ENCODE measurements at regions of chr12 and their contacts with region 1.

Region 1: DNA sequence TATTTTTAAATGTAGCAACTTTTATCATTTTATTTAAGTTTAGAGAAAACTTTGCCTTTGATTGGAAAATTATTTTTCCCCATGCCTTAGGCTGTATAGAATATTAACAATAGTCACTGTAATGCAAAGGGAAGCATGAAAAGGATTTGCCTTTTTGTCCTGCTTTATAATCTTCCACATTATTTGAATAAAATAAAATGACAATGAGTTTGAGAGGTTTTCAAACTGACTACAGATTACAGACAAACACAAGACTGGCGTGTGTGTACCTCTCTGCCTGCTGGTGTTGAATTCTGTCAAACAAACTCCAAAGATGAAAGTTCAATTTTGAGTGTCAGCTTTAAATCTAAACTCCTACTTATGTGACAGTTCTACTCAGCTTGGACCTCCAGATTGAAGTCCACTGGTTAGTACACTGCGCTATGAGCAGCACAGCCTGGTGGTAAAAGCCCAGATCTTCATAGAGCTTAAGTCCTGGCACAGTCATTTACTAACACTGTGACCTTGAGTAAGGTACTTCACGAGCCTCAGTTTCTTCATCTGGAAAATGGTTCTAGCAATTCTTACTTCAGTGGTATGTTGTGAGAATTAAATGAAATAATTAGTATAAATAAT is 98.3 kb upstream of the CPNE8 start:
- DNase-seq: no peak
- ATAC-seq: no peak
- H3K4me3 ChIP-seq: no peak overlapping the region
- H3K27ac ChIP-seq: no peak overlapping the region
- H3K4me1 ChIP-seq: no peaks in the 10 kb centered on the region
- H3K27me3 ChIP-seq: no peaks in the 10 kb centered on the region
- CTCF ChIP-seq: no peak
- POLR2A ChIP-seq: no peak
- RAD21 ChIP-seq: no peak

Region 2: GRCh38 chr12:38728894-38729293 is 274.8 kb before region 1 on chr12:
- CTCF ChIA-PET with region 1: no interaction called
- POLR2A ChIA-PET with region 1: no interaction called
- dilution Hi-C with region 1: no loop called
- in situ Hi-C with region 1: no loop called
- intact Hi-C with region 1: no loop called
- DNase-seq: no peak
- ATAC-seq: no peak
- H3K4me3 ChIP-seq: no peak overlapping the region
- H3K27ac ChIP-seq: no peak overlapping the region
- H3K4me1 ChIP-seq: no peaks in the 10 kb centered on the region
- H3K27me3 ChIP-seq: no peaks in the 10 kb centered on the region
- CTCF ChIP-seq: no peak
- POLR2A ChIP-seq: no peak
- RAD21 ChIP-seq: no peak

Region 3: GRCh38 chr12:38746744-38747143 is 256.9 kb before region 1 on chr12:
- CTCF ChIA-PET with region 1: no interaction called
- POLR2A ChIA-PET with region 1: no interaction called
- dilution Hi-C with region 1: no loop called
- in situ Hi-C with region 1: no loop called
- intact Hi-C with region 1: no loop called
- DNase-seq: no peak
- ATAC-seq: no peak
- H3K4me3 ChIP-seq: no peak overlapping the region
- H3K27ac ChIP-seq: no peak overlapping the region
- H3K4me1 ChIP-seq: no peaks in the 10 kb centered on the region
- H3K27me3 ChIP-seq: no peaks in the 10 kb centered on the region
- CTCF ChIP-seq: no peak
- POLR2A ChIP-seq: no peak
- RAD21 ChIP-seq: no peak

Region 4: DNA sequence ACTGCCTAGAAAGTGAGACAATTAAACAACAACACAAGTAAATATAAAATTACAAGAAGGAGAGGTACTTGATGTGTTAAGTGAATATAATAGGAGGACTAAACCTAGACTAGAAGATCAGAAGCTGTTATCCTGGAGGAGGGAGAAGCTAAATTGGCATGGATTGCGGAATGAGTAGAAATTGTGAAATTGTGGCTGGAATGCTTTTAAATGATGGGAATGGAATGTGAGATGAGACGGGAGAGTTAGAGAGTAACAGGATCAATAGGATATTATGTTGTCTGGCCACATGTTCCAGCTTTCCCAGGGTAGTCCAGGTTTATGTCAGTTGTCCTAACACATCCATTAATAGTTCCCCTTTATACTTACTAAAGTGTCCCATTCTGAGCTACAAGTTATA is 54.3 kb before region 1 on chr12:
- CTCF ChIA-PET with region 1: no interaction called
- POLR2A ChIA-PET with region 1: no interaction called
- dilution Hi-C with region 1: no loop called
- in situ Hi-C with region 1: no loop called
- intact Hi-C with region 1: loop called (anchors 10 kb)
- DNase-seq: no peak
- ATAC-seq: no peak
- H3K4me3 ChIP-seq: no peak overlapping the region
- H3K27ac ChIP-seq: no peak overlapping the region
- H3K4me1 ChIP-seq: no peaks in the 10 kb centered on the region
- H3K27me3 ChIP-seq: no peaks in the 10 kb centered on the region
- CTCF ChIP-seq: no peak
- POLR2A ChIP-seq: no peak
- RAD21 ChIP-seq: no peak

Region 5: DNA sequence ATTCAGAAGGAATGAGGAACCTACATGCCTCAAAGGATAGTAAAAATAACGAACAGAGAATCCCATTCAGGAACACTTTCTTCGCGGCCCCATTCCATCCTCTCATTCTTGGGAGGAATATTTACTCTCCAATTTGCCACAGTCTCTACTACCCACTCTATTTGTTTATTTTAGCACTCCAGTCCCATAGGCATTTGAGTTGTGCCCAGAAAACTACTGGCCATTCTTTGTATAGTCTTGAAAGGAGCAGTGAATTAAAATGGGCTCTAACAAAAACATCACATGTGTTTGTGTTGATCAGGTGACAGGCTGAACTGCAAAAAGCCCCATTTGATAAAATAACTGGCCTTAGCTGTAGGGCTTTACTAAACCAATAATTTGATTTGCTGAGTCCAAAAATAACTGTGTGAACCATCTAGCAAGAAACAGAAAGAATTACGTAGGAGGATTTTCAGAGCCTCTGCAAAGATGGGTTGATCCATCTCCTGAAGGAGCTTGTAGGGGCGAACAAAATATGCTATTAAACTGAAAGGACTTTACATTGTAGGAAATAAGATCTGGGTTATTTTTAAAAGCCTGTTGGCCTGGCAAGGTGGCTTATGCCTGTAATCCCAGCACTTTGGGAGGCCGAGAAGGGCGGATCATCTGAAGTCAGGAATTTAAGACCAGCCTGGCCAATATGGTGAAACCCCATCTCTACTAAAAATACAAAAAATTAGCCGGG is 44.1 kb after region 1 on chr12:
- CTCF ChIA-PET with region 1: no interaction called
- POLR2A ChIA-PET with region 1: no interaction called
- dilution Hi-C with region 1: no loop called
- in situ Hi-C with region 1: no loop called
- intact Hi-C with region 1: loop called (anchors 5 kb)
- DNase-seq: no peak
- ATAC-seq: no peak
- H3K4me3 ChIP-seq: no peak overlapping the region
- H3K27ac ChIP-seq: no peak overlapping the region
- H3K4me1 ChIP-seq: no peaks in the 10 kb centered on the region
- H3K27me3 ChIP-seq: no peaks in the 10 kb centered on the region
- CTCF ChIP-seq: no peak
- POLR2A ChIP-seq: no peak
- RAD21 ChIP-seq: no peak

Region 6: DNA sequence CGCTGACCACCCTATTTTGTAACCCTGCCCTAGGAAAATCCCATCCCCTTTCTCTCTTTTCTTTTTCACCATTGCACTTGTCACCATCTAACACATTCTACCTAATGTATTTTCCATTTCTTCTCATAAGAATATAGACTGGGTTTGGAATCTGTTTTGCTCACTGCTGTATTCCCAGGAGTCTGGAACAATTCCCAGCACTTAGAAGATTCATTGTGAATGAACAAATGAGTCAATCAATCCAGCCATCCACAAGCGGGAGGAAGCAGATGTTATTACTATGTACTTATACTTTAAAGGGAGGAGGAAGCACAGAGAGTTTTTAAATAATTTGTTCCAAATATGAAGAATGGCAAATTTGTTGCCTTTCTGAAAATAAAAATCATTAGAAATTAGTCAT is 297.2 kb after region 1 on chr12:
- CTCF ChIA-PET with region 1: no interaction called
- POLR2A ChIA-PET with region 1: no interaction called
- dilution Hi-C with region 1: no loop called
- in situ Hi-C with region 1: no loop called
- intact Hi-C with region 1: no loop called
- DNase-seq: no peak
- ATAC-seq: no peak
- H3K4me3 ChIP-seq: no peak overlapping the region
- H3K27ac ChIP-seq: no peak overlapping the region
- H3K4me1 ChIP-seq: no peaks in the 10 kb centered on the region
- H3K27me3 ChIP-seq: no peaks in the 10 kb centered on the region
- CTCF ChIP-seq: no peak
- POLR2A ChIP-seq: no peak
- RAD21 ChIP-seq: no peak